ENCODE measurements at regions of chr11 and their contacts with region 1.

Region 1: GRCh38 chr11:39690856-39691255 is 1768.6 kb downstream of the LRRC4C start:
- DNase-seq: no peak
- ATAC-seq: no peak
- H3K4me3 ChIP-seq: no peak overlapping the region
- H3K4me3 Mint-ChIP-seq: no peak overlapping the region
- H3K27ac ChIP-seq: no peak overlapping the region
- H3K27ac Mint-ChIP-seq: no peak overlapping the region
- H3K4me1 ChIP-seq: no peaks in the 10 kb centered on the region
- H3K4me1 Mint-ChIP-seq: no peaks in the 10 kb centered on the region
- H3K27me3 ChIP-seq: no peaks in the 10 kb centered on the region
- H3K27me3 Mint-ChIP-seq: no peaks in the 10 kb centered on the region

Region 2: DNA sequence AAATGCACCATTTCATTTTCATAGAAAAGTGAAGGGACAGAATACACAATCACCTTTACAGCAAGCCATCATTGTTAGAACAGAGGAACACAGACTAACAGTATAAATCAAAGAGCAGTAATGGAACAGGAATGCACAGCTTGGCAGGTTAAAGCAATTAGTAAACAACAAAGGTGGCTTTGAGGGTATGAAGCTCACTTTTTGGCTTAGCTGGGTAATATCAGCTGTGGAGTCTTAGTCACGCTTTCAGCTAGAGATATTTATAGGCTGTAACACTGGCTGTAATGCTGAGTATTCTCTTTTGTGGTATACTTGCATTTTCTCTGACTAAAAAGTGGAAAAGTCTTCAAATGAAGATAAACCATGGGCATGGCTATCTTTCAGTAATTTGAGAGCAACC is 11.9 kb before region 1 on chr11:
- CTCF ChIA-PET with region 1: no interaction called
- POLR2A ChIA-PET with region 1: no interaction called
- intact Hi-C with region 1: loop called in 1 of 2 experiments (anchors 2 kb)
- DNase-seq: no peak
- ATAC-seq: no peak
- H3K4me3 ChIP-seq: no peak overlapping the region
- H3K4me3 Mint-ChIP-seq: no peak overlapping the region
- H3K27ac ChIP-seq: no peak overlapping the region
- H3K27ac Mint-ChIP-seq: no peak overlapping the region
- H3K4me1 ChIP-seq: no peaks in the 10 kb centered on the region
- H3K4me1 Mint-ChIP-seq: no peaks in the 10 kb centered on the region
- H3K27me3 ChIP-seq: no peaks in the 10 kb centered on the region
- H3K27me3 Mint-ChIP-seq: no peaks in the 10 kb centered on the region

Measured in naive thymus-derived CD4-positive, alpha-beta T cell (primary cell).